ENCODE measurements at regions of chr17 and their contacts with region 1.

Region 1: GRCh38 chr17:32943647-32944191 is 15.8 kb downstream of the TMEM98 start:
- DNase-seq: no peak
- ATAC-seq: no peak
- H3K4me3 ChIP-seq: no peak overlapping the region
- H3K27ac ChIP-seq: no peak overlapping the region
- H3K4me1 ChIP-seq: no peaks in the 10 kb centered on the region
- H3K27me3 ChIP-seq: peaks cover 7% of the 10 kb centered on the region
- CTCF ChIP-seq: no peak

Region 2: GRCh38 chr17:34110315-34110714 is 1166.6 kb after region 1 on chr17:
- CTCF ChIA-PET with region 1: no interaction called
- POLR2A ChIA-PET with region 1: interaction called, 11 read pairs
- in situ Hi-C with region 1: no loop called
- intact Hi-C with region 1: no loop called
- DNase-seq: no peak
- ATAC-seq: peak; percentile 70
- H3K4me3 ChIP-seq: no peak overlapping the region
- H3K27ac ChIP-seq: no peak overlapping the region
- H3K4me1 ChIP-seq: no peaks in the 10 kb centered on the region
- H3K27me3 ChIP-seq: peaks cover 11% of the 10 kb centered on the region; the same call in 1 of the 2 replicates
- CTCF ChIP-seq: no peak